Psoas muscle (tissue), 8 donors: ENCODE measurements at regions of chr16 and their contacts with region 1.

Region 1: DNA sequence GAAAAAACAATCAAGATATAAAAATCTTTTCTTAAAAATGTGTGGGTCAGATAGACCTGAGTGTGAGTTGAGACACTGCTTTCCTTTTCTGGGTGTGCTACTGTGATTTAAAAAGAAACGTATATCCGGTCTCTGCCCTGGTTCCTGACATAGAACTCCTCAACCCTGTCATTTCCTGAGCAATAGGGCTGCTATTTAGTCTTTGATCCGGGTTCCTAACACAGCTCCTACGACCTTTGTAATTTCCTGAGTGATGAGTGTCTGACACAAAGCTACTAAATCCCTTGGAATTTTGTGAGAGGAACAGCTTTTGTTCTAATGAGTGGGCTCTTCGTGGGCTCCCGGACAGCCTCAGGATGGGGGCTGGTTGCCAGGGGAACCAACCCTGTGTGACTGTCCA is 93.9 kb upstream of the FA2H start:
- DNase-seq: no peak
- ATAC-seq: peak in 3 of 4 donors; percentile 10 to 40 (median 37)
- H3K4me3 ChIP-seq: no peak overlapping the region
- H3K27ac ChIP-seq: no peak overlapping the region
- H3K4me1 ChIP-seq: no peaks in the 10 kb centered on the region
- H3K27me3 ChIP-seq: no peaks in the 10 kb centered on the region
- CTCF ChIP-seq: no peak

Region 2: DNA sequence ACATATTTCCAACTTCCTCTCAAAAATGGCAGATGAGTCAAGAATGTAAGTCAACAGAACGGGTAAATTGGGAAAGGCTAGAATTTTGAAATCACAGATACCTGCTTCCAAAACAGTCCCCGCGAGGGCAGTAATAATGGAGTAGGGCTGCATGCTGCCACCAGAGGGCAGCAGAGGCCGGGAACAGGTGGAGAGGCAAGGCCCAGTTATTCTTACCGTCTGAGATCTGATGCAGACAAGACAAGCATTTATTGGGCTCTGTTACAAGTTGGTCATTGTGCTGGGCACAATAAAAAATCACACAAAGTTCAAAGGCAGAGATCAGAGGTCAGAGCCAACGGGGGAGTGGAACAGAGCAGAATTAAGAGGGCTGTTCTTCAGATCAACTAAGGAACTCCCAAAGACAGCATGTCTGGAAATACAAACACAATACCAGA is 159.0 kb before region 1 on chr16:
- intact Hi-C with region 1: loop called (anchors 2 kb)
- DNase-seq: peak; percentile 81 to 88
- ATAC-seq: peak; percentile 86 to 97 (median 91)
- H3K4me3 ChIP-seq: no peak overlapping the region
- H3K27ac ChIP-seq: no peak overlapping the region
- H3K4me1 ChIP-seq: no peaks in the 10 kb centered on the region
- H3K27me3 ChIP-seq: no peaks in the 10 kb centered on the region
- CTCF ChIP-seq: peak; percentile 97

Region 3: GRCh38 chr16:74813109-74813641 is 55.3 kb before region 1 on chr16:
- intact Hi-C with region 1: loop called (anchors 2 to 5 kb)
- DNase-seq: peak; percentile 59 to 74
- ATAC-seq: peak; percentile 91 to 98 (median 97)
- H3K4me3 ChIP-seq: no peak overlapping the region
- H3K27ac ChIP-seq: no peak overlapping the region
- H3K4me1 ChIP-seq: no peaks in the 10 kb centered on the region
- H3K27me3 ChIP-seq: no peaks in the 10 kb centered on the region
- CTCF ChIP-seq: peak; percentile 83

Region 4: GRCh38 chr16:75053791-75054555 is 185.5 kb after region 1 on chr16:
- intact Hi-C with region 1: no loop called
- DNase-seq: peak; percentile 69 to 86
- ATAC-seq: peak; percentile 64 to 84 (median 74)
- H3K4me3 ChIP-seq: no peak overlapping the region
- H3K27ac ChIP-seq: peak overlapping the region; percentile 68
- H3K4me1 ChIP-seq: peaks cover 44% of the 10 kb centered on the region
- H3K27me3 ChIP-seq: no peaks in the 10 kb centered on the region
- CTCF ChIP-seq: no peak